Activated CD4-positive, alpha-beta T cell treated with anti-CD3 and anti-CD28 coated beads for 36 hours (primary cell): ENCODE measurements at regions of chrX and their contacts with region 1.

Region 1: DNA sequence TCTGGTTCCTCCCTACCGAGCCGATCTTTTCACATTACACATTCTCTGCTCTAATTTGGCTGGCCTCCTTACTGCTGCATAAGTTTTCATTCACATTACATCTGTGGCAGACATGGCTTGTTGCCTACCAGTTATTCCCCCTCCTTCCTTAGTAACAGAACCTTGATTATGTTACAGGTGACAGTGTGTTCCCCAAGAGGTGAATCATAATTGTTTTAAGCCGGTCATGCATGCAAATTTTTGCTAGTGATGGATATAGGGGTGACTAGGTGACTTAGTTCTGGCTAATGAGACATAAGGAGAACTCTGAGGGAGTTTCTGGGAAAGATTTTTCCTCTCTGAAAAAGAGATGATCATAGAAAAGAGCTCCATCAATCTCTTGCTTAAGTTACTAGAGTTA is 8.4 kb upstream of the LAMP2 start:
- DNase-seq: no peak
- ATAC-seq: no peak
- H3K4me3 Mint-ChIP-seq: no peak overlapping the region
- H3K27ac Mint-ChIP-seq: no peak overlapping the region
- H3K4me1 Mint-ChIP-seq: no peaks in the 10 kb centered on the region
- H3K27me3 Mint-ChIP-seq: no peaks in the 10 kb centered on the region

Region 2: DNA sequence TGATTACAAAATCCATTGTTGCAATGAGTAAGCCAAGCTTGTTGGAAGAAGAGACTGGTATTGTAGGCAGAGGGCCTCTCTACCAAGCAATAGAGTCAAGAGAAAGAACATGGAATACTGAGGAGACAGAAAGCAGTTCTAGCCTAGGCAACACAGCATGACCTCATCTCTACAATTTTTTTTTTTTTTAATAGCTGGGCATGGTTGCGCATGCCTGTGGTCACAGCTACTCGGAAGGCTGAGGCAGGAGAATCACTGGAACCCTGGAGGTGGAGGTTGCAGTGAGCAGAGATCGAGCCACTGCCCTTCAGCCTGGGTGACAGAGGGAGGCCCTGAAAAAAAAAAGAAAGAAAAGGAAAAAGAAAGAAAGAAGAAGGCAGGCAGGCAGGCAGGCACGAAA is 238.5 kb before region 1 on chrX:
- CTCF ChIA-PET with region 1: no interaction called
- POLR2A ChIA-PET with region 1: no interaction called
- intact Hi-C with region 1: no loop called
- DNase-seq: no peak
- ATAC-seq: no peak
- H3K4me3 Mint-ChIP-seq: no peak overlapping the region
- H3K27ac Mint-ChIP-seq: no peak overlapping the region
- H3K4me1 Mint-ChIP-seq: peaks cover 17% of the 10 kb centered on the region
- H3K27me3 Mint-ChIP-seq: no peaks in the 10 kb centered on the region

Region 3: GRCh38 chrX:120316589-120317283 is 160.7 kb before region 1 on chrX:
- CTCF ChIA-PET with region 1: no interaction called
- POLR2A ChIA-PET with region 1: no interaction called
- intact Hi-C with region 1: loop called in 1 of 2 experiments (anchors 1 kb)
- DNase-seq: no peak
- ATAC-seq: peak; percentile 68
- H3K4me3 Mint-ChIP-seq: no peak overlapping the region
- H3K27ac Mint-ChIP-seq: no peak overlapping the region
- H3K4me1 Mint-ChIP-seq: no peaks in the 10 kb centered on the region
- H3K27me3 Mint-ChIP-seq: peaks cover 19% of the 10 kb centered on the region

Region 4: DNA sequence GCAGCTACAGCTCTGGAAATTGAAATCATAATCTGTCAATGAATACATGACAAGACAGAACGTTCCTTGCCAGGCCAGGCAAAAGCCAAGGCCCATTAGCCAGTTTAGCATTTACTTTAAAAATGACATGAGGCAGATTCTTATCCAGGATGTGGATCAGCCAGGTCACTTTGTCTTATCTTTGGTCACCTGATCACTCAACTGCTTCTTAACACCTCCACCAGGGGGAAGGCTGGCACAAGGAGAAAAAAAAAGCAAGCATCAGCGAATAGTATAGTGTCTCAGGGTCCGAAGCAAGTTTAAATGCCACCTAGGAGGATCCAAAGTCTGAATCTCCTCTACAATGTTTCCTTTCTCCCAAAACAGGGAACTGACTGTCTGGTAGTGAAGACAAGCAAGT is 96.8 kb before region 1 on chrX:
- CTCF ChIA-PET with region 1: no interaction called
- POLR2A ChIA-PET with region 1: no interaction called
- intact Hi-C with region 1: loop called (anchors 1 to 5 kb)
- DNase-seq: peak; percentile 33
- ATAC-seq: peak; percentile 73
- H3K4me3 Mint-ChIP-seq: no peak overlapping the region
- H3K27ac Mint-ChIP-seq: no peak overlapping the region
- H3K4me1 Mint-ChIP-seq: peaks cover 4% of the 10 kb centered on the region
- H3K27me3 Mint-ChIP-seq: no peaks in the 10 kb centered on the region

Region 5: GRCh38 chrX:121000587-121000986 is 523.1 kb after region 1 on chrX:
- CTCF ChIA-PET with region 1: no interaction called
- POLR2A ChIA-PET with region 1: no interaction called
- intact Hi-C with region 1: no loop called
- DNase-seq: no peak
- ATAC-seq: peak; percentile 33
- H3K4me3 Mint-ChIP-seq: no peak overlapping the region
- H3K27ac Mint-ChIP-seq: no peak overlapping the region
- H3K4me1 Mint-ChIP-seq: peaks cover 2% of the 10 kb centered on the region
- H3K27me3 Mint-ChIP-seq: no peaks in the 10 kb centered on the region